Naive thymus-derived CD4-positive, alpha-beta T cell (primary cell): ENCODE measurements at regions of chr6 and their contacts with region 1.

Region 1: GRCh38 chr6:53544470-53545308 is at the start of gene GCLC:
- DNase-seq: peak; percentile 70 to 85 (median 81)
- ATAC-seq: peak; percentile 75
- H3K4me3 ChIP-seq: peak within 1 kb of the TSS; percentile 83
- H3K4me3 Mint-ChIP-seq: peak within 1 kb of the TSS; percentile 87 to 100 (median 96)
- H3K27ac ChIP-seq: peak within 1 kb of the TSS; percentile 67
- H3K27ac Mint-ChIP-seq: peak within 1 kb of the TSS; percentile 84 to 94 (median 91)
- H3K4me1 ChIP-seq: peaks cover 22 to 23% of the 10 kb centered on the region in 2 donors
- H3K4me1 Mint-ChIP-seq: peaks cover 29 to 80% (median 66%) of the 10 kb centered on the region in 7 donors
- H3K27me3 ChIP-seq: no peaks in the 10 kb centered on the region
- H3K27me3 Mint-ChIP-seq: peaks cover 0 to 21% (median 0%) of the 10 kb centered on the region in 5 donors
- total RNA-seq, gene GCLC: 18.5 to 37.5 (median 27.6) TPM

Region 2: GRCh38 chr6:52419809-52420670 is 1124.6 kb before region 1 on chr6 and contains the start of gene EFHC1:
- CTCF ChIA-PET with region 1: no interaction called
- POLR2A ChIA-PET with region 1: interaction called, 3 read pairs
- intact Hi-C with region 1: loop called (anchors 1 kb)
- DNase-seq: peak; percentile 95 to 98 (median 97)
- ATAC-seq: peak; percentile 97
- H3K4me3 ChIP-seq: peak within 1 kb of the TSS; percentile 73
- H3K4me3 Mint-ChIP-seq: no peak within 1 kb of the TSS
- H3K27ac ChIP-seq: peak within 1 kb of the TSS; percentile 72
- H3K27ac Mint-ChIP-seq: peak within 1 kb of the TSS in 1 of 9 donors; percentile 96
- H3K4me1 ChIP-seq: peaks cover 13 to 19% of the 10 kb centered on the region in 2 donors
- H3K4me1 Mint-ChIP-seq: peaks cover 10 to 31% (median 24%) of the 10 kb centered on the region in 7 donors
- H3K27me3 ChIP-seq: no peaks in the 10 kb centered on the region
- H3K27me3 Mint-ChIP-seq: peaks cover 0 to 5% (median 0%) of the 10 kb centered on the region in 5 donors
- total RNA-seq, gene EFHC1: 2.4 to 13.8 (median 6.0) TPM

Region 3: GRCh38 chr6:52946306-52946705 is 598.4 kb before region 1 on chr6:
- CTCF ChIA-PET with region 1: no interaction called
- POLR2A ChIA-PET with region 1: no interaction called
- intact Hi-C with region 1: no loop called
- DNase-seq: peak in 1 of 9 donors; percentile 7
- ATAC-seq: no peak
- H3K4me3 ChIP-seq: no peak overlapping the region
- H3K4me3 Mint-ChIP-seq: peak overlapping the region in 1 of 10 donors; percentile 2
- H3K27ac ChIP-seq: no peak overlapping the region
- H3K27ac Mint-ChIP-seq: no peak overlapping the region
- H3K4me1 ChIP-seq: no peaks in the 10 kb centered on the region
- H3K4me1 Mint-ChIP-seq: peaks cover 0 to 10% (median 7%) of the 10 kb centered on the region in 7 donors
- H3K27me3 ChIP-seq: no peaks in the 10 kb centered on the region
- H3K27me3 Mint-ChIP-seq: peaks cover 17 to 30% (median 22%) of the 10 kb centered on the region in 5 donors

Region 4: GRCh38 chr6:53064726-53065215 is 479.9 kb before region 1 on chr6:
- CTCF ChIA-PET with region 1: no interaction called
- POLR2A ChIA-PET with region 1: no interaction called
- intact Hi-C with region 1: loop called in 1 of 2 experiments (anchors 1 kb)
- DNase-seq: peak; percentile 81 to 98 (median 94)
- ATAC-seq: peak; percentile 91
- H3K4me3 ChIP-seq: peak overlapping the region; percentile 95
- H3K4me3 Mint-ChIP-seq: peak overlapping the region; percentile 86 to 100 (median 99)
- H3K27ac ChIP-seq: peak overlapping the region; percentile 78
- H3K27ac Mint-ChIP-seq: peak overlapping the region; percentile 90 to 99 (median 97)
- H3K4me1 ChIP-seq: peaks cover 22% of the 10 kb centered on the region in 2 donors
- H3K4me1 Mint-ChIP-seq: peaks cover 36 to 68% (median 56%) of the 10 kb centered on the region in 7 donors
- H3K27me3 ChIP-seq: no peaks in the 10 kb centered on the region
- H3K27me3 Mint-ChIP-seq: no peaks in the 10 kb centered on the region

Region 5: GRCh38 chr6:53294095-53294494 is 250.6 kb before region 1 on chr6:
- CTCF ChIA-PET with region 1: no interaction called
- POLR2A ChIA-PET with region 1: no interaction called
- intact Hi-C with region 1: loop called in 1 of 2 experiments (anchors 5 kb)
- DNase-seq: peak in 1 of 9 donors; percentile 7
- ATAC-seq: no peak
- H3K4me3 ChIP-seq: no peak overlapping the region
- H3K4me3 Mint-ChIP-seq: peak overlapping the region in 1 of 10 donors; percentile 10
- H3K27ac ChIP-seq: no peak overlapping the region
- H3K27ac Mint-ChIP-seq: peak overlapping the region in 8 of 9 donors; percentile 41 to 86 (median 74)
- H3K4me1 ChIP-seq: peaks cover 35 to 41% of the 10 kb centered on the region in 2 donors
- H3K4me1 Mint-ChIP-seq: peaks cover 46 to 94% (median 83%) of the 10 kb centered on the region in 7 donors
- H3K27me3 ChIP-seq: no peaks in the 10 kb centered on the region
- H3K27me3 Mint-ChIP-seq: no peaks in the 10 kb centered on the region

Region 6: DNA sequence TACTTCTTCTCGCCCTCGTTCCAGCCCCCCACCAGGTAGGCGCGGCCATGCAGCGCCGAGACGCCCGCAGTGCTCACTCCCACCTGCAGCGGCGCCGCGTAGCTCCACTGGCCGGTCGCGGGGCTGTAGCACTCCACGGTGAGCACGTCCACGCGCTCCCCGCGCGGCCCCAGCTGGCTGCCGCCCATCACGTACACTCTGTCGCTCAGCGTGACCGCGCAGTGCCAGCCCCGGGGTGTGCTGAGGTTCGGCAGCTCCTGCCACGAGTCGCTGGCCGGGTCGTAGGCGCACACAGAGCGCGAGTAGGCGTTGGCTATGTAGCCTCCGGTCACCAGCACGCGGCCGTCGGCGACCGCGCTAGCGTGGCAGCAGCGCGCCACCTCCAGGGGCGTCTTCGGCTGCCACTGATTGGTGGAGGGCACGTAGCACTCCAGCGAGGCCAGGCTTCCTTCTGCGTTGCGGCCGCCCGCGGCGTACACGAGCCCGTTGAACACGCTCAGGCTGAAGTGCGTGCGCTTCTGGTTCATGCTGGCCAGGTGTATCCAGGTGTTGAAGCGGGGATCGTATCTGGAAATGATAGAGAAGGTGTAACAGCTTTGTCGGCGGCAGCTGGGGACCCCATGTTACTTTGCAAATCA is 107.2 kb after region 1 on chr6:
- CTCF ChIA-PET with region 1: interaction called, 7 read pairs
- POLR2A ChIA-PET with region 1: interaction called, 20 read pairs
- intact Hi-C with region 1: loop called (anchors 1 kb)
- DNase-seq: peak; percentile 62 to 82 (median 74)
- ATAC-seq: peak; percentile 94
- H3K4me3 ChIP-seq: peak overlapping the region; percentile 91
- H3K4me3 Mint-ChIP-seq: peak overlapping the region; percentile 90 to 99 (median 94)
- H3K27ac ChIP-seq: peak overlapping the region; percentile 45
- H3K27ac Mint-ChIP-seq: peak overlapping the region; percentile 65 to 93 (median 84)
- H3K4me1 ChIP-seq: peaks cover 9 to 15% of the 10 kb centered on the region in 2 donors
- H3K4me1 Mint-ChIP-seq: peaks cover 14 to 34% (median 21%) of the 10 kb centered on the region in 7 donors
- H3K27me3 ChIP-seq: no peaks in the 10 kb centered on the region
- H3K27me3 Mint-ChIP-seq: peaks cover 0 to 35% (median 0%) of the 10 kb centered on the region in 5 donors